Activated CD4-positive, alpha-beta T cell treated with anti-CD3 and anti-CD28 coated beads, Interleukin-2, amount 10 ng/mL, durations not matched to agents 24 days and 14 days (primary cell): ENCODE measurements at regions of chr4 and their contacts with region 1.

Region 1: GRCh38 chr4:53196882-53197771 is 168.7 kb downstream of the SCFD2 start:
- DNase-seq: peak; percentile 67
- H3K4me3 Mint-ChIP-seq: no peak overlapping the region
- H3K27ac Mint-ChIP-seq: no peak overlapping the region
- H3K4me1 Mint-ChIP-seq: no peaks in the 10 kb centered on the region
- H3K27me3 Mint-ChIP-seq: no peaks in the 10 kb centered on the region

Region 2: DNA sequence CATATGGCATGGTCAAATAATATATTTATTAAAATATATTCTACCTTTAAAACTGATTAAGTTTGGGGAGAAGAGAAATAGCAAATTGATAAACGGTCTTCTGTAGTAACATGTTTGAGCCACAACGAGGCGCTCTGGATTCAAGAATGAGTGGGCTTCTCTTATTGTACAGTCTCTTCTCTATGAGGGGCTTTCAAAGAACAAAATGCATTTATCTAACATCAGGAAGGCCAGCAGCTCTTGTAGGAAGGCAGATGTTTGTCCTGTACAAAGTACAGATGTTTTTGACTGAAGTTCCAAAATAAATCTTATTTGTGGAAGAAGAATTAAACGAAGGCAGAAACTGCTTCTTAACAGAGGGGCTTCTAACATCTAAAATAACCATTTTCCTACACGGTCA is 181.4 kb before region 1 on chr4:
- intact Hi-C with region 1: loop called (anchors 5 kb)
- DNase-seq: no peak
- H3K4me3 Mint-ChIP-seq: no peak overlapping the region
- H3K27ac Mint-ChIP-seq: peak overlapping the region; percentile 21
- H3K4me1 Mint-ChIP-seq: peaks cover 25% of the 10 kb centered on the region
- H3K27me3 Mint-ChIP-seq: no peaks in the 10 kb centered on the region

Region 3: GRCh38 chr4:53233114-53233795 is 36.1 kb after region 1 on chr4:
- intact Hi-C with region 1: no loop called
- DNase-seq: no peak
- H3K4me3 Mint-ChIP-seq: no peak overlapping the region
- H3K27ac Mint-ChIP-seq: no peak overlapping the region
- H3K4me1 Mint-ChIP-seq: no peaks in the 10 kb centered on the region
- H3K27me3 Mint-ChIP-seq: no peaks in the 10 kb centered on the region

Region 4: DNA sequence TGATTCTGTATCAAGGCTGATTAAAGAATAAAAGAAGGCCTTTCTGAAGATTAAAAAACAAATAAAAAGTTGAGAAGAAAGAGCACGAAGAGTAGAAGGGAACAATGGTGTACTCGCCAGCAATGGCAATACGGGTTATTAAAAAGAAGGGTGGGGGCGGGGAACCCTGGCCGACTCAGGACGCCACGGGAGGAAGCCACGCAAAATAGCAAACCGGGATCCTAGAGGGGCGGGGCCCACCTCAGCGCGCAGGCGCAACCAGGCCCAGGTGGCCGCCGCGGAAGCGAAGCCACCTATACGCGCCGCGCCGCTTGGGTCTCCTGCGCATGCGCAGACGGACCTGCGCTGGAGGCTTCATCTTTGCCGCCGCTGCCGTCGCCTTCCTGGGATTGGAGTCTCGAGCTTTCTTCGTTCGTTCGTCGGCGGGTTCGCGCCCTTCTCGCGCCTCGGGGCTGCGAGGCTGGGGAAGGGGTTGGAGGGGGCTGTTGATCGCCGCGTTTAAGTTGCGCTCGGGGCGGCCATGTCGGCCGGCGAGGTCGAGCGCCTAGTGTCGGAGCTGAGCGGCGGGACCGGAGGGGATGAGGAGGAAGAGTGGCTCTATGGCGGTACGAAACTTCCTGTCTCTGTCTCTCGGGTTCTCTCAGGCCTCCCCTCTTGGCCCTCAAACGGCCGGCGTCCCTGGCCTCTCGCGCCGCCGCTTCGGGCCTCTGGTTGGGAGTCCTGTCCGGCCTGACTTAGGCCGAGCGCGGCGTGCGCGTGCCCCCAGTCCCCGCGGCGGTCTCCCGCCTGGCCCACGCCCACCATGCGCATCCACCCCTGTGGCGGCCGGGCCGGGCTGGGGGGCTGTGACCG is 180.4 kb after region 1 on chr4 and contains the start of gene FIP1L1:
- intact Hi-C with region 1: loop called (anchors 5 kb)
- DNase-seq: peak; percentile 99
- H3K4me3 Mint-ChIP-seq: peak within 1 kb of the TSS; percentile 99
- H3K27ac Mint-ChIP-seq: peak within 1 kb of the TSS; percentile 98
- H3K4me1 Mint-ChIP-seq: peaks cover 26% of the 10 kb centered on the region
- H3K27me3 Mint-ChIP-seq: peaks cover 6% of the 10 kb centered on the region
- total RNA-seq, gene FIP1L1: 111 and 114 TPM in 2 replicates

Region 5: GRCh38 chr4:53804719-53805118 is 607.6 kb after region 1 on chr4:
- intact Hi-C with region 1: loop called (anchors 1 kb)
- DNase-seq: peak; percentile 73
- H3K4me3 Mint-ChIP-seq: no peak overlapping the region
- H3K27ac Mint-ChIP-seq: no peak overlapping the region
- H3K4me1 Mint-ChIP-seq: no peaks in the 10 kb centered on the region
- H3K27me3 Mint-ChIP-seq: no peaks in the 10 kb centered on the region

Region 6: DNA sequence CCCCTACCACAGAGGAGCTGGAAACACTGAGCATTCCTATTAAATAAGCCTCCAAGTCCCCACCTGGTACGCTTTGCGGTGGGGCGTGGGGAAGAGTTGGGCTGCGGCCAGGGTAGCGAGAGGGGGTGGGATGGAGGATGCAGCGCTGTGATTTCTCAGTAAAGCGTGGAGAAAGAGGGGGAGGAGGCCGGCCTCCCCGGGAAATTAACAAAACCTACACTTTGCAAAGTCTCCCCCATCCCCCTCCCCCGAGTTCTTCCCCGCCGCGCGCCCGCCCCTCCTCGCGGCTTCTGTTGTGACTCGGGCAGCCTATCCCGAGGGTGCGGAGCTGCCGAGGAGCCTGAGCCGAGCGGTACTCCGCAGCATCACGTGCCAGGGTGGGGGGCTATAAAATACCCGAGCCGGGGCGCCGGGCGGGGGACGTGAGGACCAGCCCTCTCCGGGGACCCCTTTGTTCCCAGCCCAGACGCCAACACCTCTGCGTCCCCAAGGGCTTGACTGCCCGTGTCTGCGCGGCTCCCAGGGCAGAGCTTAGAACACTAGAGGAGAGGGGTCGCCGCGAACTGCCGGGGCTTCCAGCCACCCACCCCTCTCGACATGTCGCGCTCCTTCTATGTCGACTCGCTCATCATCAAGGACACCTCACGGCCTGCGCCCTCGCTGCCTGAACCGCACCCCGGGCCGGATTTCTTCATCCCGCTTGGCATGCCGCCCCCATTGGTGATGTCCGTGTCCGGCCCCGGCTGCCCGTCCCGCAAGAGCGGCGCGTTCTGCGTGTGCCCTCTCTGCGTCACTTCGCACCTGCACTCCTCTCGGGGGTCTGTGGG is 902.8 kb after region 1 on chr4 and contains the start of gene GSX2:
- intact Hi-C with region 1: loop called (anchors 5 kb)
- DNase-seq: peak; percentile 59
- H3K4me3 Mint-ChIP-seq: peak within 1 kb of the TSS; percentile 59
- H3K27ac Mint-ChIP-seq: no peak within 1 kb of the TSS
- H3K4me1 Mint-ChIP-seq: peaks cover 31% of the 10 kb centered on the region
- H3K27me3 Mint-ChIP-seq: peaks cover 90% of the 10 kb centered on the region
- total RNA-seq, gene GSX2: not detected in 2 replicates

Region 7: DNA sequence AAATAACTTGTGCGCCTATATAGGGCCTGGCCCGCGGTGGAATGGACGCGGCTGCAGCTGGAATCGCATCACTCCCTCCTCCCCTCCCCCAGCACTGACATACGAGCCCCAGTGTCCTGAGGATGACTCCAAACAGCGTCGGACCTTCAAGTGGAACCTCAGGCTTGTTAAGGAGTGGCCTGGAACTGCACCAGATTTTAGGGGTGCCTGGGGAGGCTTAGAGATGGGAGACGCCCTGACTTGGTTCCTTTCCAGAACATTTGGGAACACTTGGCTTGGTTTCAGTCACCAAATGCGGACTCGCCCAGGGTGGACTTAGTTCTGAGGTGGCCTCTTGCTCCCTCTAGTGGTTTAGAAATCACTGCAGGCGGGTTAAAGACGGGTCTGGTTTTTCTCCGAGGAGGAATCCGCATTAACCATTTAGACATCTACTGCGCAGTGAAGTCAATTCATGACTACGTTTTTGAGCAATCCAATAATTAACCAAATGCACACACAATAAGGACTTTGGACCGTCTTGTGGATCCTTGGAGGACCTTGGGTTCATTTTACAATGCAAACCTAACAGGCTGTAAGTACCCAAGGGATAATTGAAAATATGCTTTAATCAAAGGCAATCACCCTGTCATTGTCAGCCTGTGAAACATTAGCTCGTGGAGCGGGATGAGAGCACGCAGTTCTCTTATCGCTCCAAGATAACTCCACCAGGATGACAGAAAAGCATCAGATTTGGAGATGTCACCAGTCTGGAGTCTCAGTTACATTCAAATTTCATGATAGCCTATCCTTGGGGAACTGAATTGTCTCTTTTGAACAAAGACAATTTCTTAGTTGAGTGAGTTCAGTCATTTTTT is 1020.7 kb after region 1 on chr4:
- intact Hi-C with region 1: loop called (anchors 5 kb)
- DNase-seq: peak; percentile 87
- H3K4me3 Mint-ChIP-seq: peak overlapping the region; percentile 49
- H3K27ac Mint-ChIP-seq: no peak overlapping the region
- H3K4me1 Mint-ChIP-seq: peaks cover 4% of the 10 kb centered on the region
- H3K27me3 Mint-ChIP-seq: peaks cover 26% of the 10 kb centered on the region